ENCODE measurements at regions of chr15 and their contacts with region 1.

Region 1: DNA sequence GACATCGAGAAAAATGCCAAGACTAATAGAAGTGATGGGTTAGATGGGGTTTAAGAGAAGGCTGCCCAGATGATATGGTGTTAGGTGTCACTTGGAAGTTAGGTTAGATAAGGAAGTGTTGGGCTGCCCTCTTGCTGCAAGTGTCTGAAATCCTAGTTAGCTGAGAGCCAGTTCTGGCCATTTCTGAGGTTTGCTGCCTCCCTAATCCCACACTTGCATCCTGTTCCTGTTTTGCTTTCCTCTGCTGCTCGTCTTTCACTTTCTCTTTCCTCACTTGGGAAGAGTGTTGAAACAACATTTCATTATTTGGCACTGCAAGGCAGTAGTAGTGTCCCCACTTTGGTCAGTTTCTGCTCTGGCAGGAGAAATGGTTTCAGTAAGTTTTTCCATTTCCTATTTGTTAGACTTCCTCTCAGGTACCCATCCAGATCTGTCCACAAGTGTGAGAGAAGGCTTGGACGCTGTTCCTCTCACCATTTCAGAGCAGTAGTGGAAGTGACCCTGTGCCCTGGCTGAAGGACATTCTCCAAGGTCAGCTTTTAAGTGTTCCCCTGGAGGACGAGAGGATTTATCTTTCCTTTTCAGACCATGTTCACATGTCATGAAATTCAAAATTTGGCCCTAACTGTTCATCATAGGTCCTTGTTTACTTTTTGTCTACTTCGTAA is 93.3 kb downstream of the ADAMTSL3 start:
- DNase-seq: peak in 1 of 2 donors; percentile 49
- ATAC-seq: peak; percentile 66 to 90 (median 83)
- H3K4me3 ChIP-seq: peak overlapping the region in 6 of 10 donors; percentile 15 to 27 (median 21)
- H3K27ac ChIP-seq: peak overlapping the region in 8 of 10 donors; percentile 7 to 67 (median 50)
- H3K4me1 ChIP-seq: peaks cover 0 to 20% (median 15%) of the 10 kb centered on the region in 9 donors
- H3K27me3 ChIP-seq: no peaks in the 10 kb centered on the region
- CTCF ChIP-seq: peak in 7 of 9 donors; percentile 18 to 61 (median 40)

Region 2: GRCh38 chr15:83559310-83559966 is 187.7 kb before region 1 on chr15:
- intact Hi-C with region 1: loop called in 3 of 10 experiments (anchors 2 to 10 kb)
- DNase-seq: peak in 1 of 2 donors; percentile 41
- ATAC-seq: peak in 5 of 8 donors; percentile 44 to 67 (median 55)
- H3K4me3 ChIP-seq: no peak overlapping the region
- H3K27ac ChIP-seq: no peak overlapping the region
- H3K4me1 ChIP-seq: no peaks in the 10 kb centered on the region
- H3K27me3 ChIP-seq: peaks cover 0 to 11% (median 5%) of the 10 kb centered on the region in 7 donors
- CTCF ChIP-seq: peak; percentile 63 to 84 (median 81)

Region 3: DNA sequence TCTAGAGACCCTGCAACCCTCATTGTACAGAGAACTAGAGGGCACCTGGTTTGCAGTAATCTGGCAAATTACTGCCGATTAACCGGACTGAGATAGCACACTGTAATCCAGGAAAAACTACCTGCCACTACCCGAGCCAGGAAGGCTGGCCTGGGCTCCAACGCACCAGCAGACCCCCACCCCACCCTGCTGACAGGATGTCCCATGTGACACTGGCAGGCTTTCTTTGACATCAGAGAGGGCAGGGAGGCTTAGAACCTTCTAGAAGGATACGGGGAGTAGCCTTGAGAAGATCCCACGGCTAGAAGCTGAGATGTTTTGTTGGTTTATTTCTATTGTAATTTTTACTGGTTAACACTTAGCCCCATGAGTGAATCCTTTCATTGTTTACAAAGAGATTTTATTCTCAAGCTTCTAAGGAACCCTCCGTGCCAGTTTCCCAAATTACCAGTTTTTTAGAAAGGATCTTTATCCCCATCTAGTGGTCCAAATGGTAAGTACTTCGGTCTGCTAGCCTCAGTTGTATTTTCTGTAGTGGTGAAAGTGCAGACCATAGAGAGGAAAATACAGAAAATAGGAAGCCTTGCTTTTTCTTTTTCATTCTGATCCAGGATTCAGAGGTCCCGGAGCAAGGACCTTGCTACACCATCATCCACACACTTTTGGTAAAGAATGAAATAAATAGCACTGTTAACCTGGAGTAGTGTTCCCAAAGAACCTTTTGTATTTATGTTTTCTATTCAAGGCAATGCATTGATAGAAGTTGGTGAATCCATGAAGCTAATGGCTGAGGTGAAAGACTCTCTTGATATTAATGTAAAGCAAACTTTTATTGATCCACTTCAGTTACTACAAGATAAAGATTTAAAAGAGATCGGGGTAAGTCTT is 175.1 kb before region 1 on chr15:
- intact Hi-C with region 1: loop called in 7 of 10 experiments (anchors 5 to 10 kb)
- DNase-seq: no peak
- ATAC-seq: no peak
- H3K4me3 ChIP-seq: no peak overlapping the region
- H3K27ac ChIP-seq: no peak overlapping the region
- H3K4me1 ChIP-seq: no peaks in the 10 kb centered on the region
- H3K27me3 ChIP-seq: peaks cover 0 to 4% (median 0%) of the 10 kb centered on the region in 7 donors
- CTCF ChIP-seq: peak; percentile 32 to 68 (median 61)

Region 4: GRCh38 chr15:83595191-83595590 is 152.0 kb before region 1 on chr15:
- intact Hi-C with region 1: no loop called
- DNase-seq: no peak
- ATAC-seq: no peak
- H3K4me3 ChIP-seq: no peak overlapping the region
- H3K27ac ChIP-seq: no peak overlapping the region
- H3K4me1 ChIP-seq: peaks cover 0 to 7% (median 0%) of the 10 kb centered on the region in 9 donors
- H3K27me3 ChIP-seq: no peaks in the 10 kb centered on the region
- CTCF ChIP-seq: no peak

Region 5: DNA sequence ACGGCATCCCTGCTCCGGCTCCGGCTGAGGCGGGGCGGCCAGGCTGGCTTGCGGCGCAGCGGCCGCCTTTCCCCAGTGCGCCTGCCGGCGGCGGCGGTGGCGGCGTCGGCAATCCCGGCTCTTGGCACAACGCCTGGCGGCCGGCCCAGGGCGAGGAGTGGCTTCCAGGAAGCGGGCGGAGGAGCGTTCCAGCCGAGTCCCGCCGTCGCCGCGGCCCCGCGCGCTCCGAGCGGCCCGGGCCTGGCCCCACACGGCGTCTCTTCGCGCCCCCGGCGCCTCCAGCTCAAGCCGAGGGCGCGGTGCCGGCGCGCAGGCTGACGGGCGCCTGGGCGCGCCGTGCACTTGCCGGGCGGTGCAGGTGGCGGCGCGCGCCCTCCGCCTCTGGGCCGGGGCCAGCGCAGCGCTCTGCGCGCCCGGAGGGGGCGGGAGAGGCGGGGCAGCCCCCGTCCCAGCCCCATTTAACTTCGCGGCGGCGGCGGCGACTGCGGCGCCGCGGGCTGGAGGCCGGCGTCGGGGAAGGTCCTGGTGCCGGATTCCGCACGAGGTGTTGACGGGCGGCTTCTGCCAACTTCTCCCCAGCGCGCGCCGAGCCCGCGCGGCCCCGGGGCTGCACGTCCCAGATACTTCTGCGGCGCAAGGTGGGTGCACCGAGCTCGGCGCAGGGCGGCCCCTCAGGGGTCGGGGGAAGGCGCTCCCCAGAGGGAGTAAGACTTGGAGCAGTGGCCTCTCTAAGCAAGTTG is 93.4 kb before region 1 on chr15 and contains the start of gene ADAMTSL3:
- intact Hi-C with region 1: loop called in 2 of 10 experiments (anchors 10 kb)
- DNase-seq: peak; percentile 80 to 90
- ATAC-seq: peak; percentile 34 to 82 (median 64)
- H3K4me3 ChIP-seq: peak within 1 kb of the TSS; percentile 38 to 72 (median 60)
- H3K27ac ChIP-seq: peak within 1 kb of the TSS; percentile 56 to 89 (median 85)
- H3K4me1 ChIP-seq: peaks cover 7 to 56% (median 20%) of the 10 kb centered on the region in 9 donors
- H3K27me3 ChIP-seq: peaks cover 0 to 36% (median 9%) of the 10 kb centered on the region in 7 donors
- CTCF ChIP-seq: peak in 3 of 9 donors; percentile 15 to 25 (median 24)
- total RNA-seq, gene ADAMTSL3: 4.3 to 15.4 (median 11.3) TPM

Region 6: GRCh38 chr15:83784975-83785374 is 37.8 kb after region 1 on chr15:
- intact Hi-C with region 1: no loop called
- DNase-seq: no peak
- ATAC-seq: no peak
- H3K4me3 ChIP-seq: no peak overlapping the region
- H3K27ac ChIP-seq: no peak overlapping the region
- H3K4me1 ChIP-seq: peaks cover 0 to 12% (median 0%) of the 10 kb centered on the region in 9 donors
- H3K27me3 ChIP-seq: no peaks in the 10 kb centered on the region
- CTCF ChIP-seq: no peak

Region 7: GRCh38 chr15:83848315-83849050 is 101.3 kb after region 1 on chr15:
- intact Hi-C with region 1: loop called in 1 of 10 experiments (anchors 10 kb)
- DNase-seq: no peak
- ATAC-seq: peak in 7 of 8 donors; percentile 44 to 70 (median 60)
- H3K4me3 ChIP-seq: no peak overlapping the region
- H3K27ac ChIP-seq: peak overlapping the region in 9 of 10 donors; percentile 6 to 77 (median 57)
- H3K4me1 ChIP-seq: peaks cover 0 to 59% (median 32%) of the 10 kb centered on the region in 9 donors
- H3K27me3 ChIP-seq: no peaks in the 10 kb centered on the region
- CTCF ChIP-seq: no peak

Region 8: GRCh38 chr15:84151205-84151931 is 404.2 kb after region 1 on chr15:
- intact Hi-C with region 1: no loop called
- DNase-seq: no peak
- ATAC-seq: peak in 1 of 8 donors; percentile 10
- H3K4me3 ChIP-seq: no peak overlapping the region
- H3K27ac ChIP-seq: no peak overlapping the region
- H3K4me1 ChIP-seq: no peaks in the 10 kb centered on the region
- H3K27me3 ChIP-seq: no peaks in the 10 kb centered on the region
- CTCF ChIP-seq: no peak